Activated CD4-positive, alpha-beta memory T cell treated with anti-CD3 and anti-CD28 coated beads, Interleukin-2, amount 10 ng/mL, durations not matched to agents 7 days and 5 days (primary cell): ENCODE measurements at regions of chr3 and their contacts with region 1.

Region 1: GRCh38 chr3:47824541-47825473 is 21.9 kb downstream of the DHX30 start:
- DNase-seq: peak; percentile 82
- H3K4me3 Mint-ChIP-seq: peak overlapping the region; percentile 83
- H3K27ac Mint-ChIP-seq: peak overlapping the region; percentile 47
- H3K4me1 Mint-ChIP-seq: peaks cover 38% of the 10 kb centered on the region
- H3K27me3 Mint-ChIP-seq: no peaks in the 10 kb centered on the region

Region 2: GRCh38 chr3:47802734-47803477 is 21.9 kb before region 1 on chr3 and contains the start of gene DHX30:
- CTCF ChIA-PET with region 1: interaction called, 26 read pairs
- POLR2A ChIA-PET with region 1: interaction called, 19 read pairs
- DNase-seq: peak; percentile 86
- H3K4me3 Mint-ChIP-seq: peak within 1 kb of the TSS; percentile 93
- H3K27ac Mint-ChIP-seq: peak within 1 kb of the TSS; percentile 90
- H3K4me1 Mint-ChIP-seq: peaks cover 30% of the 10 kb centered on the region
- H3K27me3 Mint-ChIP-seq: peaks cover 2% of the 10 kb centered on the region
- total RNA-seq, gene DHX30: 62.0 to 63.0 TPM

Region 3: GRCh38 chr3:47813551-47814177 is 11.1 kb before region 1 on chr3:
- CTCF ChIA-PET with region 1: interaction called, 49 read pairs
- POLR2A ChIA-PET with region 1: interaction called, 10 read pairs
- DNase-seq: no peak
- H3K4me3 Mint-ChIP-seq: no peak overlapping the region
- H3K27ac Mint-ChIP-seq: no peak overlapping the region
- H3K4me1 Mint-ChIP-seq: no peaks in the 10 kb centered on the region
- H3K27me3 Mint-ChIP-seq: no peaks in the 10 kb centered on the region

Region 4: GRCh38 chr3:47836986-47837385 is 12.2 kb after region 1 on chr3:
- CTCF ChIA-PET with region 1: interaction called, 53 read pairs
- POLR2A ChIA-PET with region 1: interaction called, 13 read pairs
- DNase-seq: no peak
- H3K4me3 Mint-ChIP-seq: no peak overlapping the region
- H3K27ac Mint-ChIP-seq: no peak overlapping the region
- H3K4me1 Mint-ChIP-seq: no peaks in the 10 kb centered on the region
- H3K27me3 Mint-ChIP-seq: no peaks in the 10 kb centered on the region

Region 5: DNA sequence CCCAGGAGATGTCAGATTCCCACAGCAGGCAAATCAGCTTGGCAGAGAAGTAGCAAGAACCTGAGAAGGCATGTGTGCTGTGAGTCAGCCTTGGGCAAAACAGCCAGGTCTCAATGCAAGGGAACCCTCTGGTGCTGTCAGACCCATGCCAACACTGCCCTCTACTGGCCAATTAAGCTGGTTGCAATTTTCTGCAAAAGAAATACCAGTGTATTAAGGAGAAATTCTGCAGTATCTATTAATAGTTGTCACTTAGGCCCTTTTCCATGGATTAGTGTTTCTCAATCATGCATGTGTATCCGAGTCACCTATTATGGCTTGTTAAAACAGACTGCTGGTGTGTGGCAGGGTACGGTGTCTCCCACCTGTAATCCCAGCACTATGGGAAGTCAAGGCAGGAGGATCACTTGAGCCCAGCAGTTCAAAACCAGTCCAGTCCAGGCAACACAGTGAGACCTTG is 165.2 kb after region 1 on chr3:
- CTCF ChIA-PET with region 1: interaction called, 26 read pairs
- POLR2A ChIA-PET with region 1: interaction called, 3 read pairs
- DNase-seq: peak; percentile 75
- H3K4me3 Mint-ChIP-seq: no peak overlapping the region
- H3K27ac Mint-ChIP-seq: no peak overlapping the region
- H3K4me1 Mint-ChIP-seq: peaks cover 10% of the 10 kb centered on the region
- H3K27me3 Mint-ChIP-seq: no peaks in the 10 kb centered on the region

Region 6: GRCh38 chr3:48151058-48151806 is 326.4 kb after region 1 on chr3:
- CTCF ChIA-PET with region 1: interaction called, 17 read pairs
- POLR2A ChIA-PET with region 1: interaction called, 3 read pairs
- DNase-seq: peak; percentile 72
- H3K4me3 Mint-ChIP-seq: no peak overlapping the region
- H3K27ac Mint-ChIP-seq: no peak overlapping the region
- H3K4me1 Mint-ChIP-seq: no peaks in the 10 kb centered on the region
- H3K27me3 Mint-ChIP-seq: no peaks in the 10 kb centered on the region